Gastrocnemius medialis (tissue), 4 donors: ENCODE measurements at regions of chr2 and their contacts with region 1.

Region 1: DNA sequence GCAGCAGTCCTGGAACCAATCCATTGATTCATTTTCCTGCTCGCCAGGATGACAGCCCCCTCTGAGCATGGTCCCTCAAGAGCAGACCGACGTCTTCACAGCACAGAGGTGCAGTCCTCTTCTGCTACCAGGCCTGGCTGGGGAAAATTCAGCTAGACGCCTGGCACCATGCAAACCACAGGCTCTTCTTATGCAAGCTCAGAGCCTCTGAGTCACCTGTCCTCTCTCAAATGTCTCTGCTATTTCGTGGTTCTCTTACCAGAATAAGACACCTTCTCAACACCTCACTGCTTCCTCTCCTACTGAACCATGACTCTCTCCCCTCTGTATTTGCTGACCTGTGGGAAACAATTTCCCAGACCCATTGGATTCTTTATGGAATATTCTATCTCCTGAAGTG is 79.8 kb upstream of the CYRIA start:
- DNase-seq: peak; percentile 28 to 54
- ATAC-seq: peak; percentile 94 to 97
- H3K4me3 ChIP-seq: no peak overlapping the region
- H3K27ac ChIP-seq: peak overlapping the region in 2 of 4 donors; percentile 28 to 60
- H3K4me1 ChIP-seq: peaks cover 3% of the 10 kb centered on the region in 2 donors
- H3K27me3 ChIP-seq: no peaks in the 10 kb centered on the region
- CTCF ChIP-seq: no peak
- POLR2A ChIP-seq: no peak

Region 2: DNA sequence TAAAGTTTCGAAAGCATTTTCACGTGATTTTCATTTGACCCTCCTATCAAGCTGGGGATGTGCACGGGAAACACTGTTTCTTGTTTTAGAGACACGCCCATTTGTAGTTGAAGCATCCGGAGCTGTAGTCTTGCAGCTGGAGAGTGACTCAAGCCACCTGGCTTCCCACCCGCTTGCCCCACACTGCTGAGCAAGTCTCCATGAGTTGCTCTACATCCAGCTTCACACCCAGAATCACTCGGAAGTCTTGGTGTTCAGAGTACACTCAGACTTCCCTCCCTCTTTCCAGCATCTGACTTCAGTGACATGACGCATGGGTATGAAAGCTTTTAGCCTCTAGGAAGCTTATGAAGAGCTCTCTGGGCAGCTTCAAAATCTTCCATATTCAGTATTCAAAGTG is 1446.7 kb before region 1 on chr2:
- in situ Hi-C with region 1: no loop called
- intact Hi-C with region 1: loop called (anchors 5 kb)
- DNase-seq: no peak
- ATAC-seq: no peak
- H3K4me3 ChIP-seq: no peak overlapping the region
- H3K27ac ChIP-seq: no peak overlapping the region
- H3K4me1 ChIP-seq: no peaks in the 10 kb centered on the region
- H3K27me3 ChIP-seq: no peaks in the 10 kb centered on the region
- CTCF ChIP-seq: no peak
- POLR2A ChIP-seq: no peak

Region 3: GRCh38 chr2:16625201-16625729 is 120.2 kb before region 1 on chr2:
- in situ Hi-C with region 1: loop called in 1 of 4 experiments (anchors 5 kb)
- intact Hi-C with region 1: no loop called
- DNase-seq: peak in 1 of 2 donors; percentile 55
- ATAC-seq: peak; percentile 33 to 51
- H3K4me3 ChIP-seq: no peak overlapping the region
- H3K27ac ChIP-seq: peak overlapping the region; percentile 44 to 81 (median 65)
- H3K4me1 ChIP-seq: peaks cover 47 to 73% of the 10 kb centered on the region in 2 donors
- H3K27me3 ChIP-seq: no peaks in the 10 kb centered on the region
- CTCF ChIP-seq: no peak
- POLR2A ChIP-seq: no peak